ENCODE measurements at regions of chr12 and their contacts with region 1.

Region 1: DNA sequence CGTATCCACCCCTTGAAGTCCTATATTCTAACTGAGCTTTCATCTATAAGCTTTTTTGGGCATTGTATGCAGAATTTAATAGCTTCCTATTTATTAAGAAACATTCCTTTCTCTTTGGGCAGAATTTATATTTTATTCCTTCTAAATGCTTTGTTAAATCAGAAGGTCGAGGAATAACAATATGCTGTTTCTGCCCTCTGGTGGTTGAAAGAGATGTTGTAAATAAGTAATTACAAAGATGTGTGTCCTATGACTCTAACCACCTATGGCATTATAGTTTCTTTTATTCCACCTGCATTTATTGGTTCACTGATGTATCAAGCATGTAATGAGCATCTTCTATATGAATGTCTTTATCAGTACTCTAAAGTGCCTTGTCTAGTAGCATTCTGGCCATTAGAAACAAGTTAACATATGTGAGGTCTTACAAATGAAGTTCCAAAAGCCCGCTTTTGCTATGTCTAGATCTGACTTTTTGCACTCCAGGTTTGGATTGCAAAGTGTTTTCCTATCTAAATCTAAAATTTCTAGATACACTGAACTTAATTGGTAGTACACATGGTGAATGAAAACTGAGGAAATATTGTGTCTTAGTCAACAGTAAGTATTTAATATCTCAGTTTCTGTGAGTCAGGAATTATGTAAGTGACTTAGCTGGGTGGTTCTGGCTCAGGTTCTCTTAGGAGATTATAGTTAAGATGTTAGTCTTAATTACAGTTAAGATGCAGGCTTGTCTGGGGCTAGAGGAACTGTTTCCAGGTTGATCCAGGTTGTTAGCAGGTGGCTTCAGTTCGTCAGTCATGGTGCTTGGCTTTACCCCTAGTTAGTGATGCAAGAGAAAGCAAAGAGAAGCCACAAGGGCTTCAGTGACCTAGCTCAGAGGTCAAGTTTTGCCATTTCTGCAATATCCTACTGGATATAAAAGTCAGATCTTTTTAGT is 57.5 kb downstream of the PLEKHA5 start:
- DNase-seq: peak; percentile 18
- CTCF ChIP-seq: peak; percentile 30

Region 2: GRCh38 chr12:18139989-18140596 is 1046.9 kb before region 1 on chr12:
- in situ Hi-C with region 1: loop called (anchors 25 kb)
- DNase-seq: no peak
- CTCF ChIP-seq: peak; percentile 37

Region 3: DNA sequence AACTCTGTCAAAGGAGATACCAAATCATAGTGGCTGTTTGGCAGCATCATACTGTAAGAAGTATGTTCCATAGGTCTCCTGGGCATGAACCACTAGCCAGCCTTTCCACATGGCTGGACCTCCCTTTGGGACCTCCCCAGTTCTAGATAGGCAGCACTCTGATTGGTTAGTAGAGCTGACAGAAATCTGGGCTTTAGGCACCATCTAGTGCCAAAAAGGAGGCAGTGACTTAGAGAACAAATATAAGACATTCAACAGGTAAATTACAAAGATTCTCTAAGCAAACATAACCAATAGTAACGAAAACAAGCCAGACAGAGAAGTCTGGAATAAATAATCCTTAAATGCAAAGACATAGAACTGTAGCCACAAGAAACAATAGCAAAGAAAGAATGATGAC is 1033.3 kb after region 1 on chr12:
- in situ Hi-C with region 1: no loop called
- DNase-seq: peak; percentile 12
- CTCF ChIP-seq: no peak